IMR-90 (cell line): ENCODE measurements at regions of chr1 and their contacts with region 1.

Region 1: GRCh38 chr1:150259758-150260669 is 2.4 kb downstream of the CA14 start:
- DNase-seq: no peak
- ATAC-seq: peak; percentile 64
- H3K4me3 ChIP-seq: no peak overlapping the region
- H3K27ac ChIP-seq: no peak overlapping the region
- H3K4me1 ChIP-seq: peaks cover 24% of the 10 kb centered on the region
- H3K27me3 ChIP-seq: no peaks in the 10 kb centered on the region
- CTCF ChIP-seq: no peak
- POLR2A ChIP-seq: no peak
- RAD21 ChIP-seq: no peak

Region 2: DNA sequence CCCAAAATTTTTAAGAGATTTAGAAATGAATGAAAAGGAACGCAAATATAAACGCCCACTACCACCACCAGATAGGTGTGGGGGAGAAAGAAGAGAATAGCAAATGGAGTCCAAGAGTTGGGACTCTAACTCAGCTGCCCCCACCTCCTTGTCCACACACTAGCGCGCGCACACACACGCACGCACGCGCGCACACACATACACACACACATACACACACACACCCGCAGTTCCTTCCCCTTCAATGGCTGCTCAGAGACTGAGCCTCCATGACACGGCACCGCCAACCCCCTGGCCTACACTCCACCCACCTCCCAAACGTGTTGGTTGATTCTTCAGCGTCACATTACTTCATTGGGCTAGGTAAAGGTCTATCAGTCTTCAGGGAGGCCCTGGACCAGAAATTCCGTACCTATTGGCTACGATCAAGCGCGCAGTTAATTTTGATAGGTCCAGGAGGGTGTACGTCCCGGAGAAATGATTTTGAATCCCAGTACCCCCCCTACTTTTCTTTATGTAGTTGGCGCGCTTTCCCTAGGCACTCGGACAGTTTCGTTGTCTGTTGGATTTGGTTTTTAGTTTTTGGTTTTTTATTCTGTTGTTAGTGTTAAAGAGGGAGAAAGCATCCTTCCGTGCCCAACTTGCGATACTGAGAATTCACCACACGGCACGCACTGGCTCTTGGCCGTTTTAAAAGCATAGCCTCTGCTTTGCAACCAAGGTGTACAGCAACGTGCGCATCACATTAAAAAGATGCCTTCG is 24.0 kb before region 1 on chr1 and contains the start of gene ANP32E:
- CTCF ChIA-PET with region 1: interaction called, 4 read pairs
- POLR2A ChIA-PET with region 1: interaction called, 11 read pairs
- dilution Hi-C with region 1: no loop called
- in situ Hi-C with region 1: no loop called
- intact Hi-C with region 1: no loop called
- DNase-seq: peak; percentile 100
- ATAC-seq: peak; percentile 94
- H3K4me3 ChIP-seq: peak within 1 kb of the TSS; percentile 67
- H3K27ac ChIP-seq: peak within 1 kb of the TSS; percentile 84
- H3K4me1 ChIP-seq: 0 out of 2 replicates have a peak, but pooled peaks cover 3% of the 10 kb centered on the region
- H3K27me3 ChIP-seq: no peaks in the 10 kb centered on the region
- CTCF ChIP-seq: 0 out of 2 replicates have a peak, but pooled peaks have one; percentile 3
- POLR2A ChIP-seq: peak; percentile 96
- RAD21 ChIP-seq: no peak
- total RNA-seq, gene ANP32E: 5.9 and 30.0 TPM in 2 replicates

Region 3: DNA sequence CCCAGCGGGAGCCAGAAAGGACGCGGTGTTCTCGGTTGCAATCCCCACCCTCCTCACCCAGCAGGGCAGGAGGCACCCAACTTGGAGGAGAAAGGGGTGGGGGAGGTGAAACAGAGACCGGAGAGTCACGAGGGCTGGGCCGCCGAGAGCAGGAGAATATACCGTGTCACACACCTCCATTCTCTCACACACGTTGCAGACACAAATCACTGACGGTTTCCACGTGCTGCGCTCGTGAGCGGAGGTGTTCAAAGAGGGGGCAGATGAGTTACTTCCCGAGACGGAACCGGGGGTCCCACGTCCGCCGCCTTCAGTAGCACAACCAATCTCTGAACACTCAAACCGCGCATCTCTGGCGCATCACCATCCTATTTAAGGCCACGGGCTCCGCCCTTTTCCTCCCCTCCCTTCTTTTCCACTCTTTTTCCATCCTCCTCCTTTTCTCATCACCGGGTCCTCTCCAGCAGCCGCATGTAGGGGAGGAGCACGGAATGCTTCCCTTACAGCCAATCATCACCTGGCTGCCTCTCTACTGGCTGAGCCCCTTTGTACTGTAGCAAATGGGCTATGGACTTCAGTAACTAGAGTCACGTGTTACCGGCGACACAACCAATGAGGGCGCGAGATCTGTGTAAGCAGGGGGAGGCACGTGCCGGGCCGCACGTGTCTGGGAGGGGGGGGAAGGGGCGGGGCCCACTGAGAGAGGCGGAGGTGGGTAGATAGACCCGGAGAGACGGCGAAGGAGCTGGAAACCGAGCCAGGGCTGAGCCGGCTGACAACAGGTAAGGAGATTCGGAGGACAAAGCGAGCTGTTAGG is 22.0 kb after region 1 on chr1 and contains the start of gene CIART:
- CTCF ChIA-PET with region 1: interaction called, 31 read pairs
- POLR2A ChIA-PET with region 1: interaction called, 5 read pairs
- dilution Hi-C with region 1: no loop called
- in situ Hi-C with region 1: no loop called
- intact Hi-C with region 1: loop called (anchors 1 kb)
- DNase-seq: peak; percentile 100
- ATAC-seq: peak; percentile 98
- H3K4me3 ChIP-seq: peak within 1 kb of the TSS; percentile 58
- H3K27ac ChIP-seq: peak within 1 kb of the TSS; percentile 24
- H3K4me1 ChIP-seq: peaks cover 5% of the 10 kb centered on the region
- H3K27me3 ChIP-seq: no peaks in the 10 kb centered on the region
- CTCF ChIP-seq: no peak
- POLR2A ChIP-seq: peak; percentile 63
- RAD21 ChIP-seq: no peak
- total RNA-seq, gene CIART: 13.9 and 18.1 TPM in 2 replicates

Region 4: DNA sequence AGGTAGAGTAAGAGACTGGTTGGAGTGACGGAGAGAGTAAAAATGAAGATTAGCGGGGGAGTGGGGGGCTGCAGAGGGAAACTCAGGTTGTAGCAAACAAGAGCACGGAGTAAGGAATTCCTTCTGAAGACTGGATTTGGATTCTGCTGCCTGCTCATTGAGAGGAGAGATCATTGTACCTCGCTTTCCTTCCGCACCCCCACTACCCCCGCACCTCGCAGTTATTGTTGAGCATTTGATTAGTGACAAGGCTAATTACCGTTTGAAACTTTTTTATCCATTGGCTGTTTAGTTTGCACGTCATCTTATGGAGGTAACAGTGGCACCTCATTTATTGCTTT is 61.8 kb after region 1 on chr1:
- CTCF ChIA-PET with region 1: no interaction called
- POLR2A ChIA-PET with region 1: no interaction called
- dilution Hi-C with region 1: no loop called
- in situ Hi-C with region 1: no loop called
- intact Hi-C with region 1: loop called (anchors 2 kb)
- DNase-seq: no peak
- ATAC-seq: no peak; the same call in 1 of the 2 replicates
- H3K4me3 ChIP-seq: peak overlapping the region; percentile 98
- H3K27ac ChIP-seq: peak overlapping the region; percentile 95
- H3K4me1 ChIP-seq: no peaks in the 10 kb centered on the region
- H3K27me3 ChIP-seq: no peaks in the 10 kb centered on the region
- CTCF ChIP-seq: no peak
- POLR2A ChIP-seq: no peak
- RAD21 ChIP-seq: no peak

Region 5: GRCh38 chr1:150383631-150384324 is 123.8 kb after region 1 on chr1:
- CTCF ChIA-PET with region 1: no interaction called
- POLR2A ChIA-PET with region 1: no interaction called
- dilution Hi-C with region 1: no loop called
- in situ Hi-C with region 1: no loop called
- intact Hi-C with region 1: no loop called
- DNase-seq: no peak
- ATAC-seq: no peak
- H3K4me3 ChIP-seq: no peak overlapping the region
- H3K27ac ChIP-seq: no peak overlapping the region
- H3K4me1 ChIP-seq: no peaks in the 10 kb centered on the region
- H3K27me3 ChIP-seq: no peaks in the 10 kb centered on the region
- CTCF ChIP-seq: no peak
- POLR2A ChIP-seq: no peak
- RAD21 ChIP-seq: no peak